ENCODE measurements at regions of chr14 and their contacts with region 1.

Region 1: GRCh38 chr14:95413289-95414215 is 93.8 kb upstream of the CLMN start:
- DNase-seq: no peak
- ATAC-seq: no peak
- H3K4me3 ChIP-seq: no peak overlapping the region
- H3K27ac ChIP-seq: no peak overlapping the region
- H3K4me1 ChIP-seq: peaks cover 3% of the 10 kb centered on the region
- H3K27me3 ChIP-seq: no peaks in the 10 kb centered on the region

Region 2: DNA sequence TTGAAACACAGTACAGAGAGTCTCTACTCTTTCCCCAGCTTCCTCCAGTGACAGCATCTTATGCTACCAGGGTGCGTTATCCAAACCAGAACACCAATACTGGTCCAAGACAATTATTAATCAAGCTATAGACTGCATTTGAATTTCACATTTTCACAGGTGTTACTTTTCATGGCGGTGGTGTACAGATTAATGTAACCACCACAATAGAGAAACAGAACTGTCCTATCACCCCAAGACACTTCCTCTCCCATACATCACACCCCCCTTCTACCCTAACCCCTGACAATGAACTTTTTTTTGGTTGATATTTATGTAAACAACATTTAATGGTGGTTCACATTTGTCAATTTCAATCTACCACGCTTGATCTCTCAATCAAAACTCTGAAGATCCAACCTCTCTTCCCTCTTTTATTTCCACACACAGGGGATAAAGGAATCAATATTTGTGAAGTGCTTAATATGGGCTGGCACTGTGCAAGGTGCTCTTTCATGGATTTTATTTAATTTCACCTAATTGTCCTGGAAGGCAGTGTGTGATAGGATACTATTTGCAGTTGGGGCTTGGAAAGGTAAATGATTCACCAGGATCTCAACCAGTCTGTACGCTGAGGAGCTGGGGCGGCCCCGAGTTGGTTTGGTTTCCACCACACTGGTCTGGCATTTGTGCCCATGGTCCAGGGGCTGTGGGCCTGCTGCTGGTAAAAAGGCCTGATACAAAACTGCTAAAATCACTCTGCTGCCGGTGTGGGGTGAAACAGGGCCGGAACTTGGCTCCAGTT is 201.6 kb before region 1 on chr14:
- intact Hi-C with region 1: no loop called
- DNase-seq: no peak
- ATAC-seq: no peak
- H3K4me3 ChIP-seq: no peak overlapping the region
- H3K27ac ChIP-seq: no peak overlapping the region
- H3K4me1 ChIP-seq: no peaks in the 10 kb centered on the region
- H3K27me3 ChIP-seq: no peaks in the 10 kb centered on the region

Region 3: DNA sequence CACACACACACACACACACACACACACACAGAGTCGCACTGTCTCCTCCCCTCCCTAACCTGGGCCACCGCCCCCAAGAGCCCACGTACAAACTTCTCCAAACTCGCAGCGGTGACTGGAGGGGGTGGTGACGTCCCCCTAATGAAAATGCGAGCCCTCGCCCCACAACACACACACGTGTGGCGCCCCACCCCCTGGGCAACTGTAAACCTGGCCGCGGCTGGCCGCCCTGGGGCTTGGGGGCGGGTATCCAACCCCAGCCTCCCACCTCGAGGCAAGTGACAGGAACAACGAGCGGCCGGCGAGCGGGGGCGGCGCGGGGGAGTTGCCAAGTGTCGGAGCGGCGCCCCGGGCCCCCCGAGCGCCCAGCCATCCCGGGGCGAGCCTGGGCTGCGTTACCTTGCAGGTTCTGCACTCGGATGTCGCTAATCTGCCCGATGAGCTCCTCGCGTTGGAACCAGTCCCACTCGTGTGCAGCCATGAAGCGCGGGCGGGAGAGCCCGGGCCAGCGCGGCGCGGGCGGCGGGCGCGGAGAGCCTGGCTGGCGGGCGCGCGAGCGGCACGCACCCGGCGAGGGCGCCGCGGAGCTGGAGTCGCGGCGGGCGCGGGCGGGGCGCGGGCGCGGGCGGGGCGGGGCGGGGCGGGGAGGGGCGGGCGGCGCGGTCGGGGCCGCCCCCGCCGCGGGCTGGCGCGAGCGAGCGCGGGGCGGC is 94.1 kb before region 1 on chr14 and contains the start of gene CLMN:
- intact Hi-C with region 1: loop called in 1 of 4 experiments (anchors 10 kb)
- DNase-seq: peak; percentile 38 to 81 (median 81)
- ATAC-seq: peak; percentile 48 to 63
- H3K4me3 ChIP-seq: peak within 1 kb of the TSS; percentile 58
- H3K27ac ChIP-seq: peak within 1 kb of the TSS; percentile 7
- H3K4me1 ChIP-seq: peaks cover 1% of the 10 kb centered on the region
- H3K27me3 ChIP-seq: no peaks in the 10 kb centered on the region
- total RNA-seq, gene CLMN: 6.4 to 9.1 (median 7.4) TPM

Region 4: GRCh38 chr14:95483309-95484165 is 70.0 kb after region 1 on chr14:
- intact Hi-C with region 1: no loop called
- DNase-seq: peak; percentile 88 to 93 (median 89)
- ATAC-seq: peak; percentile 87 to 95
- H3K4me3 ChIP-seq: no peak overlapping the region
- H3K27ac ChIP-seq: peak overlapping the region; percentile 71
- H3K4me1 ChIP-seq: peaks cover 24% of the 10 kb centered on the region
- H3K27me3 ChIP-seq: no peaks in the 10 kb centered on the region